ENCODE measurements at regions of chr1 and their contacts with region 1.

Region 1: GRCh38 chr1:155084722-155085503 is 6.3 kb downstream of the EFNA3 start:
- DNase-seq: peak; percentile 89 to 96
- H3K4me3 ChIP-seq: peak overlapping the region; percentile 59 to 81 (median 77)
- H3K27ac ChIP-seq: no peak overlapping the region
- H3K4me1 ChIP-seq: peaks cover 0 to 45% (median 23%) of the 10 kb centered on the region in 4 experiments; a peak in 6 of 7 replicates
- H3K27me3 ChIP-seq: peaks cover 36 to 46% (median 40%) of the 10 kb centered on the region in 4 experiments
- CTCF ChIP-seq: peak in 2 of 3 experiments; percentile 96 to 97; a peak in 3 of 4 replicates
- EP300 ChIP-seq: peak in 1 of 2 experiments; percentile 76; a peak in 1 of 3 replicates
- POLR2A ChIP-seq: 0 out of 3 replicates have a peak, but pooled peaks of 1 of the 2 experiments have one; percentile 18
- RAD21 ChIP-seq: peak; percentile 98 to 99

Region 2: GRCh38 chr1:154878371-154879022 is 206.4 kb before region 1 on chr1:
- CTCF ChIA-PET with region 1: no interaction called
- POLR2A ChIA-PET with region 1: no interaction called
- DNase-seq: peak; percentile 51 to 93
- H3K4me3 ChIP-seq: peak overlapping the region in 2 of 4 experiments; percentile 10 to 27; a peak in 2 of 8 replicates
- H3K27ac ChIP-seq: no peak overlapping the region
- H3K4me1 ChIP-seq: peaks cover 0 to 6% (median 0%) of the 10 kb centered on the region in 4 experiments; a peak in 1 of 7 replicates
- H3K27me3 ChIP-seq: no peaks in the 10 kb centered on the region
- CTCF ChIP-seq: peak; percentile 95 to 97 (median 96)
- EP300 ChIP-seq: no peak
- POLR2A ChIP-seq: no peak
- RAD21 ChIP-seq: peak; percentile 98 to 99

Region 3: GRCh38 chr1:155044812-155045690 is 39.9 kb before region 1 on chr1:
- CTCF ChIA-PET with region 1: interaction called, 907 read pairs
- POLR2A ChIA-PET with region 1: interaction called, 4 read pairs
- DNase-seq: peak; percentile 67 to 73
- H3K4me3 ChIP-seq: no peak overlapping the region
- H3K27ac ChIP-seq: no peak overlapping the region
- H3K4me1 ChIP-seq: peaks cover 4 to 15% (median 5%) of the 10 kb centered on the region in 4 experiments; a peak in 6 of 7 replicates
- H3K27me3 ChIP-seq: no peaks in the 10 kb centered on the region; a peak in 2 of 7 replicates
- CTCF ChIP-seq: peak; percentile 76 to 86 (median 79)
- EP300 ChIP-seq: no peak
- POLR2A ChIP-seq: no peak
- RAD21 ChIP-seq: peak; percentile 70 to 76

Region 4: DNA sequence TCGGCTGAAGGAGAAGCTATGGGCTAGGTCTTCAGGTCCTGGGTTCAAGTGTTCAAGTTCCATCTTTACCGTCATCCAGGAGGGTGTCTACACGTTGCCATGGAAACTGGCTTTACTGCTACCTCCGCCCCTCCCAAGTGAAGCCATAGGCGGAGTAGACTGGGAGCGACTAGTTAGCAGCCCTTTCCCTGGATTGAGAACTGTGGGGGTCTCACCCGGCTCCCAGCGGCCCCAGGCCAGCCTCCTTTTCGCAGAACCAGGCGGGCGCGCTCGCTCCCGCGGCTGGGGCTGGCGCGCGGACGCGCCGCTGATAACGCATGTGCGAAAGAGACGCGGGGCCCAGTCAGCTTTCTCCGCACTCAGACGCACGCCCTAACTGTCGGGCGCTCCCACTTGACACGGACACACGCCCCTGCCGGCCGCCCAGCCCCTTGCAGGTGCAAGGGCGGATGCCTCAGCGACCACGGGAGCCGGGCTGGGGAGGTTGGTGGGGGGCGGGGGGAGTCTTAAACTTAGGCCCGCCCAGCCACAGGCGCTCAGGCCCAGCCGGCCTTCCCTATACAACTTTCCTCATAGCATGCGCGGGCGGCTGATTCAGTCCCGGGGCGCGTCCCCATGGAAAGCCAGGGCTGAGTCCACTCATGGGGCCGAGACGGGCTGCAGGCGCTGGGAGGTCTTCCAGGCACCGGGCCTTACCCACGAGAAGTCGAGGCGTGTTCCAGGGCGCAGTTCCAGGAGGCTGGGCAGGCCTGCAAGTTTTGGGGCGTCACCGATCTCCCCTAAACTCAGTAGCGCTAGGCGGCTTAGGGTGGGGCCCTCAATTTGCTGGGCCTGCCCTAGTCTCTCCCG is 14.0 kb before region 1 on chr1:
- CTCF ChIA-PET with region 1: interaction called, 907 read pairs
- POLR2A ChIA-PET with region 1: interaction called, 21 read pairs
- DNase-seq: peak in 1 of 2 experiments; percentile 85
- H3K4me3 ChIP-seq: peak overlapping the region; percentile 42 to 64 (median 57)
- H3K27ac ChIP-seq: no peak overlapping the region
- H3K4me1 ChIP-seq: peaks cover 4 to 33% (median 21%) of the 10 kb centered on the region in 4 experiments
- H3K27me3 ChIP-seq: peaks cover 0 to 7% (median 1%) of the 10 kb centered on the region in 4 experiments; a peak in 3 of 7 replicates
- CTCF ChIP-seq: peak in 2 of 3 experiments; percentile 54 to 67; a peak in 3 of 4 replicates
- EP300 ChIP-seq: no peak
- POLR2A ChIP-seq: no peak; a peak in 1 of 3 replicates
- RAD21 ChIP-seq: peak in 1 of 2 experiments; percentile 6; a peak in 1 of 4 replicates

Region 5: DNA sequence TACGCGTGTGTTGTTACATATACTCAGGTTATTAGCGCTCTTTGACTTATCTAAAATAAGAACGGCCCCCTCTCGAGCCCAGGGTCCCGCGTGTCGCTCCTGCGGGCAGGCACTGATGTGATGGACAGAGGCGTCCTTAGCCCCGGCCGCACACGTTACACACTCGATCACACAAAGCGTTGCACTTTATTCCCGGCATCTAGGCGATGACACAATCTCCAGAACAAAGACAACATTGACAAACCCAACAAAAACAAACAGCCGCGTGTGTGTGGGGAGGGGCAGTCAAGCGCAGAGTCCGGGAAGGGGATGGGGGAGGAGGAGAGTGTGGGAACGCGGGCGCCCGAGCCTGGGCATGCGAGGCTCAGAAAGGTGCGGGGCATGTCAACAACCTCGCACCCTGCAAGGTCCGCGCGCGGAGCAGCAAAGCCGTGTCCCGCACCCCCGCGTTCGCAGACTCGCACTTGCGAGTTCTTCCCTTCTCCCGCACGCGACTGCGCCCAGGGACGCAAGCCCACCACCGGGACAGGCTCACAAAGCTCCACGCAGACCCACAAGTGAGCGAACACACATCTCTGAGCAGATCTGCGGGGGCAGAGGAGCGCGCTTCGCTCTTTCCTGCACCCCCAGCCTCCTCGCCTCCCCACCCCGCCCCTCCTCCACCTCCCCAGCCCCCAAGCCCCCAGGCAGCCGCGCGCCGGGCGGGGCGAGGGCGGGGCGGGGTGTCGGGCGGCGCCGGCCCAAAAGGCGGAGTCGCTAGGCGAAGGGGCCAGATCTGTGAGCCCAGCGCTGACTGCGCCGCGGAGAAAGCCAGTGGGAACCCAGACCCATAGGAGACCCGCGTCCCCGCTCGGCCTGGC is 42.4 kb after region 1 on chr1 and contains the start of gene EFNA1:
- CTCF ChIA-PET with region 1: interaction called, 73 read pairs
- POLR2A ChIA-PET with region 1: interaction called, 3 read pairs
- DNase-seq: peak in 1 of 2 experiments; percentile 63
- H3K4me3 ChIP-seq: peak within 1 kb of the TSS; percentile 45 to 71 (median 64)
- H3K27ac ChIP-seq: no peak within 1 kb of the TSS
- H3K4me1 ChIP-seq: peaks cover 16 to 58% (median 40%) of the 10 kb centered on the region in 4 experiments
- H3K27me3 ChIP-seq: peaks cover 33 to 50% (median 45%) of the 10 kb centered on the region in 4 experiments
- CTCF ChIP-seq: no peak
- EP300 ChIP-seq: no peak
- POLR2A ChIP-seq: no peak
- RAD21 ChIP-seq: no peak
- total RNA-seq, gene EFNA1: 4.0 and 4.9 TPM in 2 replicates

Region 6: GRCh38 chr1:155273343-155274245 is 188.7 kb after region 1 on chr1 and contains the start of gene CLK2:
- CTCF ChIA-PET with region 1: no interaction called
- POLR2A ChIA-PET with region 1: no interaction called
- DNase-seq: peak; percentile 93 to 96
- H3K4me3 ChIP-seq: peak within 1 kb of the TSS; percentile 86 to 100 (median 90)
- H3K27ac ChIP-seq: peak within 1 kb of the TSS; percentile 78; the same call in 1 of the 2 replicates
- H3K4me1 ChIP-seq: peaks cover 2 to 14% (median 5%) of the 10 kb centered on the region in 4 experiments; a peak in 6 of 7 replicates
- H3K27me3 ChIP-seq: peaks cover 0 to 3% (median 0%) of the 10 kb centered on the region in 4 experiments; a peak in 2 of 7 replicates
- CTCF ChIP-seq: no peak; a peak in 1 of 4 replicates
- EP300 ChIP-seq: peak in 1 of 2 experiments; percentile 31; a peak in 1 of 3 replicates
- POLR2A ChIP-seq: peak; percentile 62 to 68; a peak in 2 of 3 replicates
- RAD21 ChIP-seq: 0 out of 4 replicates have a peak, but pooled peaks of 1 of the 2 experiments have one; percentile 1
- total RNA-seq, gene CLK2: 58.2 and 62.2 TPM in 2 replicates

Region 7: GRCh38 chr1:155352631-155353030 is 267.7 kb after region 1 on chr1:
- CTCF ChIA-PET with region 1: no interaction called
- POLR2A ChIA-PET with region 1: no interaction called
- DNase-seq: no peak
- H3K4me3 ChIP-seq: no peak overlapping the region
- H3K27ac ChIP-seq: no peak overlapping the region
- H3K4me1 ChIP-seq: no peaks in the 10 kb centered on the region
- H3K27me3 ChIP-seq: no peaks in the 10 kb centered on the region
- CTCF ChIP-seq: no peak
- EP300 ChIP-seq: no peak
- POLR2A ChIP-seq: no peak
- RAD21 ChIP-seq: no peak

Region 8: GRCh38 chr1:155540000-155540874 is 455.3 kb after region 1 on chr1:
- CTCF ChIA-PET with region 1: no interaction called
- POLR2A ChIA-PET with region 1: no interaction called
- DNase-seq: peak in 1 of 2 experiments; percentile 37
- H3K4me3 ChIP-seq: no peak overlapping the region
- H3K27ac ChIP-seq: no peak overlapping the region
- H3K4me1 ChIP-seq: no peaks in the 10 kb centered on the region
- H3K27me3 ChIP-seq: no peaks in the 10 kb centered on the region
- CTCF ChIP-seq: no peak
- EP300 ChIP-seq: no peak
- POLR2A ChIP-seq: no peak
- RAD21 ChIP-seq: no peak

Measured in H1 (cell line).